GM13976 (cell line): ENCODE measurements at regions of chr19 and their contacts with region 1.

Region 1: DNA sequence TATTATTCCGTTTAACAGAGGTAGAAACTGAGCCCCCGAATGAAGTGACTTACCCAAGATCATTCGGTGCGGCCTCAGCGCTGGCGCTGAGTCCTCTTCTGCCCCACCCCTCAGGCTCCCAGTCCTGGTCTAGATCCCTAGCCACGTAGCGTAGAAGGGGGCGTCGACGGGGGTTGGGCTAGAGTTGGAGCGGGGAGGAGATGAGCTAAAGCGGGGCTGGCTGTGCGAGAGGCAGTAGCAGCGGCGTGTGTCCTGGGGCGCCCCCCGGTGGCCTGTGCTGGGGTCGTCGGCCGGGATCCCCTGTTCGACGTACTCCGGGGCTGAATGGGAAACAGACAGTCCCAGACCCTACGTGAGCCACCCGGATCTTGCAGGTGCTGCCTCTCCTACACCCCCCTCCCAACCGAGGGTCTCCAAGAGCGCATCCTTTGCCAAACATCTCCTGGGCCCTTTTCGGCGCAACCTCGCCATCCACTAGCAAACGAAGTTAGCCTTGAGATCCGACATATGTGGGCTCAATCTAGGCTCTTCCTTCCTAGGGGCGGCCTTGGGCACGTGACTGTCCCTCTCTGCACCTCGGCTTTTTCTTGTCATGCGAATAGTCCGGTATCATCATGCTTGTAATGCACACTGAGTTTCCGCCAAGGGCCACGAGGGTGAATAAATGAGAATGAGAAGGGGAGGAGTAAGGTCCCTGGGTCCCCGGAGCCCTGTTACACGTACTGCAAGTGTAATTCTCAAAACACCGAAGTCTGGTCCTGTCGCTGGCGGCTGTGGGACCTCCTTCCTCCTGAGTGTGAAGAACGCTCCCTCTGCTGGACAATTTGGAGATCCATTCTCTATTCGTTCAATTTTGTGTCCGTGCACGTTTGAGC is 47.7 kb downstream of the CYP4F22 start:
- DNase-seq: peak; percentile 94
- CTCF ChIP-seq: peak; percentile 87

Region 2: DNA sequence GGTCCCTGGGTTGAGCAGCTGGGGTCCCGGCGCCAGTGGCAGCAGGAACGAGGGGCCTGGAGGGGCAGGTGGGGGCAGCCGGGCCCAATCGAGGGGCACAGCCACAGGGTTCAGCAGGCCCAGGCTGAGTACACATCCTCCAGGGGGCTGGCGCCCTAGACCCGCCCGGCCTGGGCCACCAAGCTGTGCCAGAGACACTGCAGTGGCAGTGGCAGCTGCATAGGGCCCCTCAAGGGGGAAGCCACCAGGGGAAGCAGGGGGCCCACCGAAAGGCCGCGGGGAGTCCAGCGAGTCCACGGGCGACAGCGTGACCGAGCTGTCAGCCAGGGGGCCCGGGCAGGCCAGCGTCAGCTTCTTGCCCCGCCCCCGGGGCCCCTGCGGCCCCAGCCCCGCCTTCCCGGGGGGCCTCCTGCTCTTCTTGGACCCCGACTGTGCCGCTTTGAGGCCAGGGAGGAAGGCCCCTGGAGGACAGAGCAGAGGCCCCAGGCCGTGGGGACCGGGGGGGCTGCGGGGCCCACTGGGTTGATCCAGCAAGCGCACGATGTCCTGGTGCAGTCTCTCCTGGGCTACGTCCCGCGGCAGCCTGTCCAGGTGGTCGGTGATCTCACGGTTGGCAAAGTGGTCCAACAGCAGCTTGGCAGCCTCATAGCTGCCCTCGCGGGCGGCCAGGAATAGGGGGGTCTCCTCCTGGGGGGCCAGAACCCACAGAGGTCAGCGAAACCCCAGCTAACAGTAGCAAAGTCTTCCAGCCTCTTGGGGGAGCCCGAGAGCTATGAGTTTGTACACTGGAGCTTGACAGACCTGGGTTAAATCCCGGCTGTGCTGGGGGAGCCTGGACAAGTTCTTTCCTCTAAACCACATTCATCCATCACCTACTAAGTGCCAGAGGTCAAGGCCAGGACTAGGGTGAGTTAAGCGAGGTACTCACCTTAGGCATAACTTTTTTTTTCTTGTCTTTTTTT is 394.7 kb before region 1 on chr19:
- in situ Hi-C with region 1: loop called (anchors 10 kb)
- DNase-seq: peak; percentile 78
- CTCF ChIP-seq: peak; percentile 45